Heart left ventricle (tissue), 16 donors: ENCODE measurements at regions of chr20 and their contacts with region 1.

Region 1: GRCh38 chr20:56554869-56555268 is 21.8 kb downstream of the FAM209B start:
- DNase-seq: peak in 4 of 5 donors; percentile 48 to 76 (median 67)
- ATAC-seq: peak; percentile 79 to 95 (median 90)
- H3K4me3 ChIP-seq: no peak overlapping the region
- H3K27ac ChIP-seq: peak overlapping the region in 6 of 12 donors; percentile 2 to 67 (median 13)
- H3K4me1 ChIP-seq: peaks cover 0 to 33% (median 5%) of the 10 kb centered on the region in 12 donors
- H3K27me3 ChIP-seq: no peaks in the 10 kb centered on the region
- CTCF ChIP-seq: peak in 3 of 12 donors; percentile 5 to 27 (median 12)
- POLR2A ChIP-seq: no peak

Region 2: DNA sequence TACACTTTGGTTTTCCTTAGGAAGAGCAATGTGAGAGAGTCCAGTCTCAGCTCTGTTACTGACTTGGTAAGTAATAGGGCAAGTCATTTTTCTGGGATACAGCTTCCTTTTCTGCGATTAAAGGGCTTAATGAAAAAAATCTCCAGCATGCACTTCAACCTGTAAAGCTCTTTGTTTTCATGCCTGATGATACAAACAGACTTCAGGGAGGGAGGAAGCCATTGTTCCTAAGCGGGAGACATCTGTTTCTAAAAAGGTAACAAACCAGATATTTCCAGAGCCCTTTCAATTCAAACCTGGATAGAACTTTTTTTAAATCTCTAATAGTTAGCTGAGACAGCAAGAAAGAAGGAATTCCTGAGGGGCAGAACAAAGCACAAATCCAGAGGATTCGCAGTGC is 148.0 kb before region 1 on chr20:
- intact Hi-C with region 1: loop called in 1 of 10 experiments (anchors 2 kb)
- DNase-seq: no peak
- ATAC-seq: peak in 1 of 4 donors; percentile 66
- H3K4me3 ChIP-seq: no peak overlapping the region
- H3K27ac ChIP-seq: peak overlapping the region in 11 of 12 donors; percentile 19 to 82 (median 60)
- H3K4me1 ChIP-seq: peaks cover 0 to 49% (median 17%) of the 10 kb centered on the region in 12 donors
- H3K27me3 ChIP-seq: no peaks in the 10 kb centered on the region
- CTCF ChIP-seq: no peak
- POLR2A ChIP-seq: no peak

Region 3: DNA sequence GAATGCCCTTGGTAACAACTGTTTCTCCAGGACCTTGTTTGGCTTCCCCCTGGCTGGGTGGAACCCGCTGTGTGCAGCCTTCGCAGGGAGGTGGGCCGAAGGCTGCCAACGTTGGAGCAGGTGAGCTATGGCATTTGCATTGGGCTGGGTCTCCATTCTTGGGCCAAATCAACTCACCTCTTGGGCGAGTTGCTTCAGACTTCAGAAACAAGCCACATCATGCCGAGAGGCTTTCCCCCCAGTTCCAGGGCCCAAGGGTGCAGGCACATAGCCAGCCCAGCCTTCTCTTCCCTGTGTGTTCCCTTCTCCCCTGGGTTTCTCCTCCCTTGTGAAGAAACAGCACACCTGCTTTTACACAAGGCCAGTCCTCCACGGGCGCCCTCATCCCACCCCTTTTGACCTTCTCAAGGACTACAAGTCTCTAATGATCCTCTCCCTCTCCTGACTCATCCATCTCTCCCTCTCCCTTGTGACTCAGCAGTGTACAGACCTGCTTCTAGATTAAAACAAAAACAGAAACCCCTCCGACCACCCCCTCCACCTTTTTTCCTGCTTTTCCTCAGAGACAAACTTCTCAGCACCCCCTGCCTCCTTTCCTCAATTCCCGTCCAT is 19.8 kb after region 1 on chr20:
- intact Hi-C with region 1: loop called in 8 of 10 experiments (anchors 1 to 2 kb)
- DNase-seq: no peak
- ATAC-seq: no peak
- H3K4me3 ChIP-seq: no peak overlapping the region
- H3K27ac ChIP-seq: no peak overlapping the region
- H3K4me1 ChIP-seq: no peaks in the 10 kb centered on the region
- H3K27me3 ChIP-seq: no peaks in the 10 kb centered on the region
- CTCF ChIP-seq: no peak
- POLR2A ChIP-seq: no peak

Region 4: GRCh38 chr20:56974499-56975236 is 419.8 kb after region 1 on chr20:
- intact Hi-C with region 1: loop called in 1 of 10 experiments (anchors 5 kb)
- DNase-seq: no peak
- ATAC-seq: no peak
- H3K4me3 ChIP-seq: no peak overlapping the region
- H3K27ac ChIP-seq: no peak overlapping the region
- H3K4me1 ChIP-seq: no peaks in the 10 kb centered on the region
- H3K27me3 ChIP-seq: peaks cover 9 to 84% (median 40%) of the 10 kb centered on the region in 9 donors
- CTCF ChIP-seq: peak in 9 of 12 donors; percentile 9 to 42 (median 23)
- POLR2A ChIP-seq: no peak

Region 5: GRCh38 chr20:57048027-57048869 is 493.4 kb after region 1 on chr20:
- intact Hi-C with region 1: loop called in 1 of 10 experiments (anchors 5 kb)
- DNase-seq: no peak
- ATAC-seq: peak in 1 of 4 donors; percentile 34
- H3K4me3 ChIP-seq: no peak overlapping the region
- H3K27ac ChIP-seq: no peak overlapping the region
- H3K4me1 ChIP-seq: peaks cover 0 to 6% (median 0%) of the 10 kb centered on the region in 12 donors
- H3K27me3 ChIP-seq: peaks cover 0 to 18% (median 9%) of the 10 kb centered on the region in 9 donors
- CTCF ChIP-seq: peak in 8 of 12 donors; percentile 9 to 46 (median 40)
- POLR2A ChIP-seq: no peak

Region 6: GRCh38 chr20:57346477-57346876 is 791.6 kb after region 1 on chr20:
- intact Hi-C with region 1: loop called in 9 of 10 experiments (anchors 2 to 10 kb)
- DNase-seq: peak; percentile 47 to 76 (median 65)
- ATAC-seq: peak; percentile 44 to 56 (median 50)
- H3K4me3 ChIP-seq: no peak overlapping the region
- H3K27ac ChIP-seq: no peak overlapping the region
- H3K4me1 ChIP-seq: peaks cover 0 to 4% (median 0%) of the 10 kb centered on the region in 12 donors
- H3K27me3 ChIP-seq: peaks cover 0 to 8% (median 0%) of the 10 kb centered on the region in 9 donors
- CTCF ChIP-seq: peak; percentile 56 to 82 (median 72)
- POLR2A ChIP-seq: no peak